ENCODE measurements at regions of chr13 and their contacts with region 1.

Region 1: DNA sequence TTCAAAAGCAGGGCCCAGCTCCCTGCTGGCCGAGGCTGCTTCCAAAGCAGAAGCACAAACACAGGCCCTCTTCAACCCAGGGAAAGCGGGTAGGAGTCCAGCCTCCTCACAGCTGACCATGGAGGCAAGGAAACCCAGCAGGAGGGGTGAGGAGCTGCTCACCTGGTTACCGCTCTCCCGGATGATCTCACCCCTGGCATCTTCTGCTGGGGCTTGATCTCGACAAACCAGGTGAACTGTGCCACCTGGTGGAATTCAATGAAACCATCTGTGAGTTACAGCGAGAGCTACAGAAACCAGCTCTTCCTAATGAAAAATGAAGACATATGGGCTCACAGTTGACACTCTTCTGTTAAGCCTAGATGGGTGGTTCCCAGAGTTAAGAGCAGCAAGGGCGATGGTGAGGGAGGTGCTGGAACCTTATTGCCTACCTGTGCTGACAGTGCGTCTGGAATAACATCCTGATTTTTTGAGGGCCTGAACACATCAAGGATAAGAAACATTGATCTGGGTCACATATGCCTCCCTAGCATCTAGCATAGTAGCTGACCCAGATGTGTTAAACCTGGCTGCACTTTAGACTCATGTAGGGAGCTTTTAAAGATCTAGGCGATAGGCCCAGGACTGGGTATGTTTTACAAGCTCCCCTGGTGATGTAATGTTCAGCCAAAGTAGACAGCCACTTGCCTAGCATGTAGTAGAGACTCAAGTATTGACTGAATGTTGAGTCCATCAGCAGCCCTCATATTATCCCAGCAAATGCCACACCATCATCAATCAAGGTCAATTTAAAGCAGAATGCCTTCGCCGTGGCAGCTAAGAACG is 6.1 kb downstream of the DHRS12 start:
- DNase-seq: peak in 8 of 9 experiments; percentile 30 to 81 (median 58)
- ATAC-seq: peak; percentile 60
- H3K4me3 ChIP-seq: no peak overlapping the region
- H3K4me3 Mint-ChIP-seq: no peak overlapping the region
- H3K27ac ChIP-seq: no peak overlapping the region
- H3K27ac Mint-ChIP-seq: peak overlapping the region; percentile 62
- H3K4me1 ChIP-seq: peaks cover 20% of the 10 kb centered on the region
- H3K4me1 Mint-ChIP-seq: peaks cover 26% of the 10 kb centered on the region
- H3K27me3 ChIP-seq: no peaks in the 10 kb centered on the region
- H3K27me3 Mint-ChIP-seq: no peaks in the 10 kb centered on the region
- CTCF ChIP-seq: peak; percentile 51

Region 2: GRCh38 chr13:50826035-50826434 is 971.8 kb before region 1 on chr13:
- CTCF ChIA-PET with region 1: no interaction called
- POLR2A ChIA-PET with region 1: no interaction called
- intact Hi-C with region 1: no loop called
- DNase-seq: no peak
- ATAC-seq: no peak
- H3K4me3 ChIP-seq: no peak overlapping the region
- H3K4me3 Mint-ChIP-seq: no peak overlapping the region
- H3K27ac ChIP-seq: no peak overlapping the region
- H3K27ac Mint-ChIP-seq: no peak overlapping the region
- H3K4me1 ChIP-seq: no peaks in the 10 kb centered on the region
- H3K4me1 Mint-ChIP-seq: no peaks in the 10 kb centered on the region
- H3K27me3 ChIP-seq: no peaks in the 10 kb centered on the region
- H3K27me3 Mint-ChIP-seq: peaks cover under 1% of the 10 kb centered on the region
- CTCF ChIP-seq: no peak

Region 3: DNA sequence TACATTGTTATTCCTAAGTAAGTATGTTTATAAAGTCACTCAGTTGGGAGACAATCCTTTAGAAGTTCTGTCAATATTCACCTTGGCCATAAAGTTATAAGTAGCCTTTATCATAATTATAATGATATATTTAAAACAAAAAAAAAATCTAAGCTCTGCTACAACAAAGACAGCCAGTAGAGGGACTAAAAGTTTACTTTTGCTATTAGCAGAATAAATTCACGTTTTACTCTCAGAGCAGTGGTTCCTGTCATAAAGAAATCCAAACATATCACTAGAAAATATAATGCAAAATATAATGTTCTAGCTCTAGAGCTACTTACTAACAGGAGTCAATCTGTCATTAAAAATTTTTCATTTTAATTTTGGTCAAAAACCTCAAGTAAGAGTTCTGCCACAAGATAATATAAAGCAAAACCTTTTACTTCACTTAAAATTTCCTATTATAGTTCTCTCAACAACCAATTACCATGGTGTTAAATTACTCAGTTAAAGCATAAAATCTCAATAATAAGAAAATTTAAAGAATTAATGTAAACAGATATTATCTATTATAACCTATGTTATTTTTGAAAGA is 362.8 kb before region 1 on chr13:
- CTCF ChIA-PET with region 1: interaction called, 50 read pairs
- POLR2A ChIA-PET with region 1: interaction called, 4 read pairs
- intact Hi-C with region 1: loop called (anchors 1 kb)
- DNase-seq: peak in 2 of 9 experiments; percentile 39 to 60
- ATAC-seq: peak; percentile 57
- H3K4me3 ChIP-seq: no peak overlapping the region
- H3K4me3 Mint-ChIP-seq: no peak overlapping the region
- H3K27ac ChIP-seq: no peak overlapping the region
- H3K27ac Mint-ChIP-seq: no peak overlapping the region
- H3K4me1 ChIP-seq: peaks cover 3% of the 10 kb centered on the region
- H3K4me1 Mint-ChIP-seq: peaks cover 23% of the 10 kb centered on the region
- H3K27me3 ChIP-seq: no peaks in the 10 kb centered on the region
- H3K27me3 Mint-ChIP-seq: no peaks in the 10 kb centered on the region
- CTCF ChIP-seq: peak; percentile 87

Region 4: GRCh38 chr13:51645154-51645650 is 152.7 kb before region 1 on chr13:
- CTCF ChIA-PET with region 1: interaction called, 7 read pairs
- POLR2A ChIA-PET with region 1: interaction called, 3 read pairs
- intact Hi-C with region 1: loop called (anchors 2 to 5 kb)
- DNase-seq: peak in 4 of 9 experiments; percentile 37 to 80 (median 62)
- ATAC-seq: peak; percentile 81
- H3K4me3 ChIP-seq: no peak overlapping the region
- H3K4me3 Mint-ChIP-seq: peak overlapping the region; percentile 52
- H3K27ac ChIP-seq: peak overlapping the region; percentile 66 to 71
- H3K27ac Mint-ChIP-seq: peak overlapping the region; percentile 96
- H3K4me1 ChIP-seq: peaks cover 44% of the 10 kb centered on the region
- H3K4me1 Mint-ChIP-seq: peaks cover 50% of the 10 kb centered on the region
- H3K27me3 ChIP-seq: no peaks in the 10 kb centered on the region
- H3K27me3 Mint-ChIP-seq: no peaks in the 10 kb centered on the region
- CTCF ChIP-seq: no peak

Region 5: GRCh38 chr13:51759240-51759639 is 38.6 kb before region 1 on chr13:
- CTCF ChIA-PET with region 1: interaction called, 7 read pairs
- POLR2A ChIA-PET with region 1: interaction called, 4 read pairs
- intact Hi-C with region 1: loop called in 1 of 2 experiments (anchors 2 kb)
- DNase-seq: no peak
- ATAC-seq: no peak
- H3K4me3 ChIP-seq: no peak overlapping the region
- H3K4me3 Mint-ChIP-seq: no peak overlapping the region
- H3K27ac ChIP-seq: no peak overlapping the region
- H3K27ac Mint-ChIP-seq: no peak overlapping the region
- H3K4me1 ChIP-seq: peaks cover 3% of the 10 kb centered on the region
- H3K4me1 Mint-ChIP-seq: peaks cover 7% of the 10 kb centered on the region
- H3K27me3 ChIP-seq: no peaks in the 10 kb centered on the region
- H3K27me3 Mint-ChIP-seq: no peaks in the 10 kb centered on the region
- CTCF ChIP-seq: no peak

Region 6: GRCh38 chr13:51832471-51833152 is 34.7 kb after region 1 on chr13:
- CTCF ChIA-PET with region 1: interaction called, 52 read pairs
- POLR2A ChIA-PET with region 1: interaction called, 143 read pairs
- intact Hi-C with region 1: no loop called
- DNase-seq: peak; percentile 35 to 83 (median 64)
- ATAC-seq: peak; percentile 98
- H3K4me3 ChIP-seq: no peak overlapping the region
- H3K4me3 Mint-ChIP-seq: peak overlapping the region; percentile 36
- H3K27ac ChIP-seq: no peak overlapping the region
- H3K27ac Mint-ChIP-seq: peak overlapping the region; percentile 28
- H3K4me1 ChIP-seq: peaks cover 48% of the 10 kb centered on the region
- H3K4me1 Mint-ChIP-seq: peaks cover 60% of the 10 kb centered on the region
- H3K27me3 ChIP-seq: no peaks in the 10 kb centered on the region
- H3K27me3 Mint-ChIP-seq: no peaks in the 10 kb centered on the region
- CTCF ChIP-seq: peak; percentile 62